Activated naive CD4-positive, alpha-beta T cell treated with anti-CD3 and anti-CD28 coated beads for 36 hours (primary cell): ENCODE measurements at regions of chr10 and their contacts with region 1.

Region 1: GRCh38 chr10:116444527-116445142 is 17.0 kb downstream of the PNLIPRP3 start:
- DNase-seq: no peak
- H3K4me3 Mint-ChIP-seq: no peak overlapping the region
- H3K27ac Mint-ChIP-seq: no peak overlapping the region
- H3K4me1 Mint-ChIP-seq: no peaks in the 10 kb centered on the region
- H3K27me3 Mint-ChIP-seq: peaks cover 11% of the 10 kb centered on the region

Region 2: GRCh38 chr10:116490028-116490662 is 45.5 kb after region 1 on chr10:
- CTCF ChIA-PET with region 1: interaction called, 3 read pairs
- intact Hi-C with region 1: loop called (anchors 1 kb)
- DNase-seq: no peak
- H3K4me3 Mint-ChIP-seq: no peak overlapping the region
- H3K27ac Mint-ChIP-seq: no peak overlapping the region
- H3K4me1 Mint-ChIP-seq: no peaks in the 10 kb centered on the region
- H3K27me3 Mint-ChIP-seq: peaks cover 2% of the 10 kb centered on the region

Region 3: DNA sequence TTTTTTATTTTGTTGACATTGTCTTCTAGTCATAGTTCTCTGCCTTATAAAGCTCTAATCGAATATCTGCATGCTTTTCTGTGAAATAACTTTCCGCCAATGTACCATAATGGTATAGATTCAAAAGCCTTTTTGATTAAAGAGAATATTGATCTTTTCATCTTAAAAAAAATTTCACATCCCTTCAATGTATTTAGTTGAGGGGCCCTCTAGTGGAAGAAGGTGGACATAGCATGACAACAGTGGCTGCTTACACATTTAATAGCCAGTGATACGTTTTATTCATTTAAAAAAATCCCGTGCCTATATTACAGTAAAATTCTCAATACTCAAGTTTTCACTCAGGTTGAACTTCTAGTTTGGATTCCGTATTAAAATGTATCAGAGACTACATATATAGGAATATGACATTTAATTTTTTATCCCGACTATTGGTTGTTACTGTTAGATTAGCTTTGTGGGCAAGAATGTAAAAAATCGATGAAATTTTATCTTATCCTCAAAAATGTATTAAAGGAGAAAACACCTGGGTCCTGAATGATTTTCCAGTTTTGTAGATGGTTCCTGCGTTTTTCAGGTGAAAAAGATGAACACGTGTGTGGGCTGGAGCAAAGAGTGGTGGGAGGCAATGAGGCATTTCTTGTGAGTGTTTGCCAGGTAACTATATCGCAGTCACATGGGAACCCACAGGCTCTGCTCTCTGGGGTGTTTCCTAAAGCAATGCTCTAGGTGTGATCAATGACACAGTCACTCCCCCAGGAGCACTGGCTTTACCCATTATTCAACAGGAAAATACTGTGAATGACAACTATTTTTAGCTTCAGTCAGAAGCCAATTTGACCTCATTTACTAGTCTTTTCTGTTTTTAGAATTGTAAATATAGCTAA is 77.0 kb after region 1 on chr10:
- CTCF ChIA-PET with region 1: no interaction called
- intact Hi-C with region 1: loop called (anchors 1 kb)
- DNase-seq: peak; percentile 45
- H3K4me3 Mint-ChIP-seq: no peak overlapping the region
- H3K27ac Mint-ChIP-seq: no peak overlapping the region
- H3K4me1 Mint-ChIP-seq: no peaks in the 10 kb centered on the region
- H3K27me3 Mint-ChIP-seq: peaks cover 11% of the 10 kb centered on the region